ENCODE measurements at regions of chr1 and their contacts with region 1.

Region 1: DNA sequence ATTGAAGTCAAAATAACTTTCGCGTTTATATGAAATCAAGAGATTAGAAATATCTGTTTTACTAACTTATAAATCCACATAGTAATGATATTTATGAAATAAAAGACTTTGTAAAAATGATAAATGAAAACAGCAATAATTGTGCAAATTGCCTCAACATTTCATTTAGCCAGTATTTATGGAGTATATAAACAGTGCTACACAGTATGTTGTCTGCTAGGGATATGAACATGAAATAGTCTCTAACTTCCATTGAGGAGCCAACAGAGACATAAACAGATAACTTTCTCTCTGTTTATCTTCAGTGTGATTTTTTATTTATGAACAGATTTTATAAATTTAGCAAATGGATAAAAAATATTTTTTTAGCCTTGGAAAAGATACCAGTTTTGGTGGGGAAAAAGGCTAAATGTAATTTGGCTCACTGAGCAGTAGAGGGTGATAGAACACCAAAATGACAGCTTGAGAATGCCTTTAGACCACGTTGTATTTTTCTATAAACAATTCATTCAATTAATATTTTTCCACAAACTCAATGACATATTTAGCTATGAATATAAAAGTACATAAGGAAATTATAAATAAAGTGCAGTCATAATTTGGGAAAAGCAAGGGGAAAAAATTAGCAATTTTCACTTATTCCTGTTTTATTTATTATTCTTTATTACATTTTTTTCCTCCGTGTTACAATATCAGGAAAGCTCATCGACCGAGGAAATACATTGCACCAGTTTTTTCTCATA is 47.5 kb upstream of the EEIG2 start:
- DNase-seq: no peak
- H3K4me3 ChIP-seq: peak overlapping the region in 4 of 59 donors; percentile 2 to 22 (median 10)
- H3K27ac ChIP-seq: no peak overlapping the region
- H3K27me3 ChIP-seq: no peaks in the 10 kb centered on the region
- CTCF ChIP-seq: peak; percentile 57 to 95 (median 86)

Region 2: GRCh38 chr1:108559215-108560186 is 47.1 kb after region 1 on chr1 and contains the start of gene EEIG2:
- intact Hi-C with region 1: loop called (anchors 5 kb)
- DNase-seq: peak; percentile 55 to 89 (median 73)
- H3K4me3 ChIP-seq: peak within 1 kb of the TSS; percentile 39 to 86 (median 71)
- H3K27ac ChIP-seq: peak within 1 kb of the TSS in 57 of 59 donors; percentile 4 to 90 (median 74)
- H3K27me3 ChIP-seq: no peaks in the 10 kb centered on the region
- CTCF ChIP-seq: peak; percentile 35 to 83 (median 66)
- total RNA-seq, gene EEIG2: 15.5 to 50.7 (median 31.6) TPM

Region 3: GRCh38 chr1:108643492-108644335 is 131.3 kb after region 1 on chr1:
- intact Hi-C with region 1: loop called (anchors 2 to 5 kb)
- DNase-seq: peak in 3 of 10 donors; percentile 18 to 67 (median 57)
- H3K4me3 ChIP-seq: no peak overlapping the region
- H3K27ac ChIP-seq: peak overlapping the region in 4 of 59 donors; percentile 7 to 68 (median 23)
- H3K27me3 ChIP-seq: no peaks in the 10 kb centered on the region
- CTCF ChIP-seq: peak; percentile 23 to 82 (median 66)

Measured in dorsolateral prefrontal cortex (tissue), 120 donors.